ENCODE measurements at regions of chr14 and their contacts with region 1.

Region 1: GRCh38 chr14:57066887-57067513 is 201.7 kb downstream of the EXOC5 start:
- DNase-seq: peak; percentile 2
- ATAC-seq: peak; percentile 60
- H3K4me3 ChIP-seq: no peak overlapping the region
- H3K27ac ChIP-seq: no peak overlapping the region
- H3K4me1 ChIP-seq: no peaks in the 10 kb centered on the region
- H3K27me3 ChIP-seq: peaks cover 1% of the 10 kb centered on the region; the same call in 1 of the 2 replicates
- CTCF ChIP-seq: peak; percentile 44
- POLR2A ChIP-seq: no peak
- RAD21 ChIP-seq: peak; percentile 51

Region 2: GRCh38 chr14:56918849-56919574 is 148.0 kb before region 1 on chr14:
- CTCF ChIA-PET with region 1: no interaction called
- POLR2A ChIA-PET with region 1: no interaction called
- dilution Hi-C with region 1: no loop called
- in situ Hi-C with region 1: no loop called
- intact Hi-C with region 1: no loop called
- DNase-seq: no peak
- ATAC-seq: no peak
- H3K4me3 ChIP-seq: no peak overlapping the region
- H3K27ac ChIP-seq: no peak overlapping the region
- H3K4me1 ChIP-seq: no peaks in the 10 kb centered on the region
- H3K27me3 ChIP-seq: no peaks in the 10 kb centered on the region
- CTCF ChIP-seq: no peak
- POLR2A ChIP-seq: no peak
- RAD21 ChIP-seq: no peak

Region 3: DNA sequence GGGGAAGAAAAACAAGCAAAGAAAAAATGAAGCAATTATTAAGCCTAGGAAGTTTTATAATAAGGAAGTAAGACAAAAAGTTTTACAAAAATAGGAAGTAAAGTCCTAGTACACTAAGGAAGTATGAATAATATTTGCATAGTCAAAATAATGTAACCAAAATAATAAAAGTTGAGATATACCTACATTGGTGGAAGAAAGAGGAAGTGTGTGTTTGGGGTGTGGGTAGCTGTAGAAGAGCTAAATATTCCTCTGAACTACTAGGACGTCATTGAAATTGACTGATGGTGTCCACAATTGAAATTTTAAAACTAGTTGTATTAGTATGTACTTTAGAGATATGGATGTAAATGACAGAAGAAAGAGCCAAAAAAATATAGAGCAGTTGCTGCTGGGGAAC is 28.3 kb before region 1 on chr14:
- CTCF ChIA-PET with region 1: no interaction called
- POLR2A ChIA-PET with region 1: no interaction called
- dilution Hi-C with region 1: no loop called
- in situ Hi-C with region 1: no loop called
- intact Hi-C with region 1: no loop called
- DNase-seq: no peak
- ATAC-seq: no peak
- H3K4me3 ChIP-seq: no peak overlapping the region
- H3K27ac ChIP-seq: no peak overlapping the region
- H3K4me1 ChIP-seq: no peaks in the 10 kb centered on the region
- H3K27me3 ChIP-seq: no peaks in the 10 kb centered on the region
- CTCF ChIP-seq: no peak
- POLR2A ChIP-seq: no peak
- RAD21 ChIP-seq: no peak

Region 4: GRCh38 chr14:57227083-57227482 is 160.1 kb after region 1 on chr14:
- CTCF ChIA-PET with region 1: no interaction called
- POLR2A ChIA-PET with region 1: no interaction called
- dilution Hi-C with region 1: no loop called
- in situ Hi-C with region 1: no loop called
- intact Hi-C with region 1: no loop called
- DNase-seq: no peak
- ATAC-seq: no peak
- H3K4me3 ChIP-seq: no peak overlapping the region
- H3K27ac ChIP-seq: no peak overlapping the region
- H3K4me1 ChIP-seq: no peaks in the 10 kb centered on the region
- H3K27me3 ChIP-seq: no peaks in the 10 kb centered on the region
- CTCF ChIP-seq: no peak
- POLR2A ChIP-seq: no peak
- RAD21 ChIP-seq: no peak

Region 5: GRCh38 chr14:57317316-57317715 is 250.3 kb after region 1 on chr14:
- CTCF ChIA-PET with region 1: no interaction called
- POLR2A ChIA-PET with region 1: no interaction called
- dilution Hi-C with region 1: no loop called
- in situ Hi-C with region 1: no loop called
- intact Hi-C with region 1: loop called (anchors 2 kb)
- DNase-seq: peak; percentile 78
- ATAC-seq: peak; percentile 85
- H3K4me3 ChIP-seq: no peak overlapping the region
- H3K27ac ChIP-seq: no peak overlapping the region
- H3K4me1 ChIP-seq: no peaks in the 10 kb centered on the region
- H3K27me3 ChIP-seq: peaks cover 7% of the 10 kb centered on the region
- CTCF ChIP-seq: peak; percentile 93
- POLR2A ChIP-seq: no peak
- RAD21 ChIP-seq: peak; percentile 85

Measured in IMR-90 (cell line).